Endothelial cell of umbilical vein (primary cell): ENCODE measurements at regions of chr1 and their contacts with region 1.

Region 1: GRCh38 chr1:33127001-33127791 is 46.2 kb downstream of the AZIN2 start:
- DNase-seq: peak; percentile 99
- H3K4me3 ChIP-seq: peak overlapping the region; percentile 72 to 92 (median 88)
- H3K27ac ChIP-seq: peak overlapping the region; percentile 68
- H3K4me1 ChIP-seq: peaks cover 10% of the 10 kb centered on the region
- H3K27me3 ChIP-seq: peaks cover 0 to 2% of the 10 kb centered on the region in 2 experiments
- CTCF ChIP-seq: peak; percentile 97 to 99
- POLR2A ChIP-seq: peak; percentile 96

Region 2: DNA sequence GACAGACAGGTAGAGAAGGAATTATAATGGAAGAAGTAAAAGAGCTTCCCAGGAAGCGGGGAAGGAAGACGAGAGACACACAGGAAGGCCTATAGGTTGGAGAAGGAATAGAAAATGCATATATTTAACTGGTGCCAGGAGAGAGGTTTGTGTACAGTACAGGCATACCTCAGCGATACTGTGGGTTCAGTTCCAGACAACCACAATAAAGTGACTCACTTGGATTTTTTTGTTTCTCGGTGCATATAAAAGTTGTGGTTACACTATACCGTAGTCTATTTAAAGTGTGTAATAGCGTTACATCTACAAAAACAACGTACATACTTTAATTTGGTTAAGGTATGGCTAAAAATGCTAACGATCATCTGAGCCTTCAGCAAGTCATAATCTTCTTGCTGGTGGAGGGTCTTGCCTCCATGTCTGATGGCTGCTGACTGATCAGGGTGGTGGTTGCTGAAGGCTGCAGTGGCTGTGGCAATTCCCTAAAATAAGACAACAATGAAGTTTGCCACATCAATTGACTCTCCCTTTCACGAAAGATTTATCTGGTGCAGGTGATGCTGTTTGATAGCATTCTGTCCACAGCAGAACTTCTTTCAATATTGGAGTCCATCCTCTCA is 326.0 kb before region 1 on chr1:
- CTCF ChIA-PET with region 1: no interaction called
- POLR2A ChIA-PET with region 1: no interaction called
- dilution Hi-C with region 1: no loop called
- intact Hi-C with region 1: no loop called
- DNase-seq: no peak
- H3K4me3 ChIP-seq: no peak overlapping the region
- H3K27ac ChIP-seq: no peak overlapping the region
- H3K4me1 ChIP-seq: peaks cover under 1% of the 10 kb centered on the region
- H3K27me3 ChIP-seq: no peaks in the 10 kb centered on the region
- CTCF ChIP-seq: no peak
- POLR2A ChIP-seq: no peak

Region 3: GRCh38 chr1:33036526-33037503 is 90.4 kb before region 1 on chr1 and contains the start of gene AK2:
- CTCF ChIA-PET with region 1: no interaction called
- POLR2A ChIA-PET with region 1: no interaction called
- dilution Hi-C with region 1: no loop called
- intact Hi-C with region 1: no loop called
- DNase-seq: peak; percentile 99
- H3K4me3 ChIP-seq: peak within 1 kb of the TSS; percentile 56 to 77 (median 65)
- H3K27ac ChIP-seq: peak within 1 kb of the TSS; percentile 52
- H3K4me1 ChIP-seq: peaks cover 15% of the 10 kb centered on the region
- H3K27me3 ChIP-seq: no peaks in the 10 kb centered on the region
- CTCF ChIP-seq: no peak
- POLR2A ChIP-seq: peak; percentile 18
- total RNA-seq, gene AK2: 131 and 134 TPM in 2 replicates

Region 4: GRCh38 chr1:33111970-33112369 is 15.2 kb before region 1 on chr1:
- CTCF ChIA-PET with region 1: interaction called, 14 read pairs
- POLR2A ChIA-PET with region 1: no interaction called
- dilution Hi-C with region 1: no loop called
- intact Hi-C with region 1: no loop called
- DNase-seq: peak; percentile 49
- H3K4me3 ChIP-seq: no peak overlapping the region
- H3K27ac ChIP-seq: no peak overlapping the region
- H3K4me1 ChIP-seq: no peaks in the 10 kb centered on the region
- H3K27me3 ChIP-seq: peaks cover 2 to 12% of the 10 kb centered on the region in 2 experiments
- CTCF ChIP-seq: peak in 1 of 2 donors; percentile 36
- POLR2A ChIP-seq: no peak

Region 5: GRCh38 chr1:33137800-33138199 is 10.6 kb after region 1 on chr1:
- CTCF ChIA-PET with region 1: interaction called, 19 read pairs
- POLR2A ChIA-PET with region 1: no interaction called
- dilution Hi-C with region 1: no loop called
- intact Hi-C with region 1: no loop called
- DNase-seq: peak; percentile 50
- H3K4me3 ChIP-seq: no peak overlapping the region
- H3K27ac ChIP-seq: no peak overlapping the region
- H3K4me1 ChIP-seq: no peaks in the 10 kb centered on the region
- H3K27me3 ChIP-seq: peaks cover 2 to 3% of the 10 kb centered on the region in 2 experiments
- CTCF ChIP-seq: peak; percentile 51 to 80
- POLR2A ChIP-seq: no peak

Region 6: GRCh38 chr1:33161061-33161681 is 34.0 kb after region 1 on chr1:
- CTCF ChIA-PET with region 1: interaction called, 9 read pairs
- POLR2A ChIA-PET with region 1: no interaction called
- dilution Hi-C with region 1: no loop called
- intact Hi-C with region 1: loop called (anchors 5 kb)
- DNase-seq: peak; percentile 66
- H3K4me3 ChIP-seq: no peak overlapping the region
- H3K27ac ChIP-seq: no peak overlapping the region
- H3K4me1 ChIP-seq: peaks cover 22% of the 10 kb centered on the region
- H3K27me3 ChIP-seq: no peaks in the 10 kb centered on the region
- CTCF ChIP-seq: no peak
- POLR2A ChIP-seq: no peak

Region 7: DNA sequence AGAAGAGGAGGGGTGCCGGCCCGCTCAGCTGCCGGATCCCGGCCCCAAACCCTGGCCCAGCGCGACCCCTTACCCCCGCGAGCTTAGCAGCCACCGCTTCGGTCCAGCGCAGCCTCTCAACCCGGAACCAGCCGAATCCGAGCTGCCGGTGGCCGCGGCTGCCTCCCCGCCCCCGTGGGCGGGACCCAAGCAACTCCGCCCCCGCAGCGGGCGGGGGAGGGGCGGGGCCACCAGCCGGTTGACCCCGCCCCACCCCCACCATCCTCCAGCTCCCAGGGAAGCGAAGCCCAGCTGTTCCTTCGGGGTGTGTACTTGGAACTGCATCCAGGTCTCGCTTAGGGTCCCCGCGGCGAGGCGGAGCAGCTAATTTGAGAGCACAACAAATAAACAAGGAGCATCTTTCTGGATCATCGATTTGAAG is 54.7 kb after region 1 on chr1 and contains the start of gene TRIM62:
- CTCF ChIA-PET with region 1: interaction called, 15 read pairs
- POLR2A ChIA-PET with region 1: interaction called, 4 read pairs
- dilution Hi-C with region 1: no loop called
- intact Hi-C with region 1: loop called (anchors 1 kb)
- DNase-seq: peak; percentile 81
- H3K4me3 ChIP-seq: peak within 1 kb of the TSS; percentile 37 to 83 (median 64)
- H3K27ac ChIP-seq: no peak within 1 kb of the TSS
- H3K4me1 ChIP-seq: peaks cover 5% of the 10 kb centered on the region
- H3K27me3 ChIP-seq: peaks cover 15 to 20% of the 10 kb centered on the region in 2 experiments
- CTCF ChIP-seq: no peak
- POLR2A ChIP-seq: peak; percentile 64
- total RNA-seq, gene TRIM62: 8.3 and 8.6 TPM in 2 replicates

Region 8: DNA sequence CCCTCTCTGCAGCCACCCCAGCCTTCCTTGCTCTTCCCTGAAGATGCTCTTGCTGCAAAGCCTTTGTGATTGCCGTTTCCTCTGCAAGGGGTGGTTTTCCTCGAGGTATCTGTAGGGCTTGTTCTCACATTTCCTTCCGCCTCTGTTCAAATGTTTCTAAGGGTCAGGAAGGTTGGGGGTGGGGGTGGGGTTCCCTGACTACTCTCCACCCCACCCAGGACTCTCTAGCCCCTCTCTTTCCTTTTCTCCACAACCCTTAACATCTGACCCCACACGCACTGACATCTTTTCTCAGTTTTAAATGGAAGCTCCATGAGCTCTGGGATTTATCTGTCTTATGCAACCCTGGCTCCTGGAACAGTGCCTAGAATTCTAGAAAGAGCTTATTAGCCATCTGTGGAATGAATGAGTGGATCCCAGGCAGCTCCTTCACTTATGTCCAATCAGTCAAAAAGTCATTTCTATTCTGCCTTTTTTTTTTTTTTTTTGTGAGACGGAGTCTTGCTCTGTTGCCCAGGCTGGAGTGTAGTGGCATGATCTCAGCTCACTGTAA is 101.8 kb after region 1 on chr1:
- CTCF ChIA-PET with region 1: no interaction called
- POLR2A ChIA-PET with region 1: no interaction called
- dilution Hi-C with region 1: no loop called
- intact Hi-C with region 1: no loop called
- DNase-seq: no peak
- H3K4me3 ChIP-seq: no peak overlapping the region
- H3K27ac ChIP-seq: no peak overlapping the region
- H3K4me1 ChIP-seq: peaks cover 3% of the 10 kb centered on the region
- H3K27me3 ChIP-seq: peaks cover 3 to 23% of the 10 kb centered on the region in 2 experiments
- CTCF ChIP-seq: no peak
- POLR2A ChIP-seq: no peak

Region 9: DNA sequence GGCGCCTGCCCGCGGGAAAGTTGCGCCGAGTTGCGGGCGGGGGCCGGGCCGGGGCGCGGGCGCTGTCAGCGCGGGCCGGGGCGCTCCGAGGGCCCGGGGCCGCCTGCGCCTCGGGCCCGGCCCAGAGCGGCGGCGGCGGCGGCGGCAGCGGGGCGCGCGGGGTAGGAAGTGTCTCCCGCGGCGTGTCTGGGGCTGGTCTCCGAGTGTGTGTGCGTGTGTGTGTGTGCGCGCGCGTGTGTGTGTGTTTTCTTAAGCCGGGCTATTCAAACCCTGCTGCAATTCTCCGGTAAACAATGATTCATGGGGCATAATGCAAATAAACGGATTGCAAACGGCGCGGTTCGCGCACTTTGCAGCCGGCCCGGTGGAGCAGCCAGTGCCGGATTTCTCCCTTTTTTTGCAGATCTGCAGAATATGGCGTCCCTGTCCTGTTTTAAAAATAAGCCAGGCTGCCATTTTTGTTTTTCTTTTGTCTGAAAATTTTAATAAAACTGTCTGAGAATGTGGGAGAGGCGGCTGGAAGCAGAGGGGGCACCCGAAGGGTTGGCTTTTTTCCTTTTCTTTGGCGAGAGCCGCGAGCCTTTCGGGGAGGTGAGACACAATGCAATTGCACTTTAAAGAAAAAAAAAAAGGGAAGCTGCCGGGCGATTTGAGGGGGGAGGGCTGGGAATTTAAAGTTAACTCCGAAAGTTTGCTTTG is 129.7 kb after region 1 on chr1:
- CTCF ChIA-PET with region 1: no interaction called
- POLR2A ChIA-PET with region 1: no interaction called
- dilution Hi-C with region 1: no loop called
- intact Hi-C with region 1: loop called (anchors 5 kb)
- DNase-seq: peak; percentile 65
- H3K4me3 ChIP-seq: peak overlapping the region; percentile 79 to 88 (median 81)
- H3K27ac ChIP-seq: peak overlapping the region; percentile 76
- H3K4me1 ChIP-seq: peaks cover 12% of the 10 kb centered on the region
- H3K27me3 ChIP-seq: no peaks in the 10 kb centered on the region
- CTCF ChIP-seq: no peak
- POLR2A ChIP-seq: peak; percentile 17

Region 10: DNA sequence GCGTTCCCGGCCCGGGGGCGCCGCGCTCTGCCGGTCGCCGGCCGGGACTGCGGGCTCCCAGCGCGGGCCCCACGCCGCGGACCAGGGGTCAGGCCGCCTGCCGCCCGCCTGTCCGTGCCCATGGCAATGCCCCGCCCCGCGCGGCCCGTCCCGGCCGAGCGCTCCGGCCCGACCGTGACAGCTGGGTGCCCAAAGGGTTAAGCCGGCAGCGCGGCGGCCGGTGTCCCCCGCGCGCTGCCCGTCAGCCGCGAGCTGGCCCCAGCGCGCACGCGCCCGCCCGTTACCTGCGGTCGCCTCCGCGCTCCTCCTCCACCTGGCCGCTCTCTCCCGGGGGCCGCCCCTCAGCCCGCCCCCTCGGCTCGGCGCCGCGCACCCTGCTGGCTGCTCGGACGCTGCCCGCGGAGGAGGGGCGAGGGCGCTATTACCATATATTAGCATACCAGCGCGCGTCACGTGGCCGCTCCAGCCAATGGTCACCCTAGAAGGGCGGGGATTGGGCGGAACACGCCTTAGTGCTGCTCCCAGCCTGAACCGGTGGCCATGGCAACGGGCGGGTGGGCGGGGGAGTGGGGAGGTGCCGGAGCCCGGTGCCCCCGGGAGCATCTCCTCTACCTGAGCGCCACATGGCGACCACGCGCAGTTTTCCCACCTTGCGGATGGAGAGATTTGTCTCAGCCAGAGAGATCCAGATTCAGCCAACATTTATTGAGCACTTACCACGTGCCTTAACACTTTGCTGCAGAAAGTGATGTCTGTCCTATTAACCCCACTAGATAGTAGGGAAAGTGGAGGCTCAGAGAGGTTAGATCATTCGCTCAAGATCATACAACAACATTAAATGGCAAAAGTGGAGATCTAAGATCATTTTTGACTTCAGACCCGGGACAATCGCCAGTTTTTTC is 303.7 kb after region 1 on chr1 and contains the start of gene PHC2:
- CTCF ChIA-PET with region 1: no interaction called
- POLR2A ChIA-PET with region 1: no interaction called
- dilution Hi-C with region 1: no loop called
- intact Hi-C with region 1: loop called (anchors 5 kb)
- DNase-seq: peak; percentile 96
- H3K4me3 ChIP-seq: peak within 1 kb of the TSS; percentile 36 to 66 (median 55)
- H3K27ac ChIP-seq: peak within 1 kb of the TSS; percentile 2
- H3K4me1 ChIP-seq: peaks cover 30% of the 10 kb centered on the region
- H3K27me3 ChIP-seq: no peaks in the 10 kb centered on the region
- CTCF ChIP-seq: peak in 1 of 2 donors; percentile 22
- POLR2A ChIP-seq: no peak
- total RNA-seq, gene PHC2: 79.0 and 82.3 TPM in 2 replicates